Head of caudate nucleus (tissue), 42 donors: ENCODE measurements at regions of chr12 and their contacts with region 1.

Region 1: GRCh38 chr12:95117178-95117599 is 43.8 kb upstream of the NR2C1 start:
- DNase-seq: peak in 38 of 42 donors; percentile 20 to 89 (median 64)

Region 2: DNA sequence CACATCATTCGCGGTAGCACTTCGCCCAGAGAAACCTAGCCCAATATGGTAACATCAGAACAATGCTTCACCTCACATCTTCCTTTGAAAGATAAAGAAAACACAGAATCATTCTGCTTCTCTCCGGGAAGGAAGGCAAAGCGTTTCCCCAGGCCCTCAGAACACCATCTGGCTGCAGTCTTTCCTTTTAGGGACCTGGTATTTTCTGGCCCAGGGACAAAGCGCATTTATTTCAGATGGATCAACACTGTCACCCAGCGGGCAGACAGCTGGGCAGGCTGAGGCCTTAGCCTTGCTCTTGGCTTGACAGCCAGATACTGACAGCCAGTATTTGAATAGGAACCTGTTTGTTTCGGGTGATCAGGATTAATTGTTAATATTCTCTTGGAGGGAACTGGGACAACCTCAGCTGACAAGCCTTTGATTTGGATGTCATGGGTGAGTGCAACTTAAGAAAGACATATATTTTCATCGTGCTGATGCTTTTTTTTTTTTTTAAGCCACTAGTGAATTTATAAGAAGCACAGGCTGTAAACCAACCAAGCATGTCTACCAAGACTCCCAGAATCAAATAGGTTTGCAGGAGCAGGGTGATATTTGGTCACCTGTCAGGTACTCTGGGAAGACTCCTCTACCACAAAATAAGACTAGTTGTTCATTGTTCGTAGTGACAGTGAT is 219.3 kb after region 1 on chr12:
- intact Hi-C with region 1: loop called (anchors 5 kb)
- DNase-seq: peak; percentile 9 to 86 (median 61)

Region 3: GRCh38 chr12:95532851-95533250 is 415.7 kb after region 1 on chr12:
- intact Hi-C with region 1: loop called (anchors 5 kb)
- DNase-seq: no peak